ENCODE measurements at regions of chr1 and their contacts with region 1.

Region 1: GRCh38 chr1:25256578-25256965 is 9.3 kb upstream of the RSRP1 start:
- DNase-seq: no peak
- CTCF ChIP-seq: no peak

Region 2: DNA sequence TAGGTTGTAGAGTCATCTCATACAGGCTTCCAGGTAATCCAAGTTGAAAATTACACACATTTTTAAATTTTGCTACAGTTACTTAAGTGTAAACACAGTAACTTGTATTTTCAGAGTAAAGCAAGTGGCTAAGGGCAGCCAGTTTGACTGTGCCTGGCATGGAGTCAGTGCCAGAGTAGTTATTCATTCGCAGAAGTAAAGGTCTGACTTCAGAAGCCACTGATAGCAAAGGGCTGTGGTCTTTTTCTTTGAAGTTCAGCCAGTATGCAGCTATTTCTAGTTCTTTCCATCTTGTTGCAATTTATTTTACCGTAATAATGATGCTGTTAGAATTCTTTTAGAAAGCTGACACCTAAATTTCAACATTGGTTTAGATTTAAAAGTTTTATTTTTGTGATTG is 91.0 kb after region 1 on chr1:
- in situ Hi-C with region 1: loop called (anchors 5 kb)
- DNase-seq: no peak
- CTCF ChIP-seq: no peak